ENCODE measurements at regions of chr6 and their contacts with region 1.

Region 1: GRCh38 chr6:25318589-25318988 is 39.4 kb downstream of the CARMIL1 start:
- DNase-seq: no peak
- ATAC-seq: no peak
- H3K4me3 ChIP-seq: no peak overlapping the region
- H3K27ac ChIP-seq: no peak overlapping the region
- H3K4me1 ChIP-seq: peaks cover 3% of the 10 kb centered on the region
- H3K27me3 ChIP-seq: no peaks in the 10 kb centered on the region
- CTCF ChIP-seq: no peak

Region 2: DNA sequence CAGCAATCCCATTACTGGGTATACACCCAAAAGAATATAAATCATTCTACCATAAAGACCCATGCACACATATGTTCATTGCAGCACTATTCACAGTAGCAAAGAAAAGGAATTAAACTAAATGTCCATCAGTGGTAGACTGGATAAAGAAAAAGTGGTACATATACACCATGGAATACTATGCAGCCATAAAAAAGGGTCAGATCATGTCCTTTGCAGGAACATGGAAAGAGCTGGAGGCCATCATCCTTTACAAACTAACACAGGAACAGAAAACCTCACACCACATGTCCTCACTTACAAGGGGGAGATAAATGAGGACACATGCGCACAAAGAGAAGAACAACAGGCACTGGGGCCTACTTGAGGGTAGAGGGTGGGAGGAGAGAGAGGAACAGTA is 1021.6 kb before region 1 on chr6:
- CTCF ChIA-PET with region 1: no interaction called
- POLR2A ChIA-PET with region 1: no interaction called
- intact Hi-C with region 1: no loop called
- DNase-seq: no peak
- ATAC-seq: no peak
- H3K4me3 ChIP-seq: no peak overlapping the region
- H3K27ac ChIP-seq: no peak overlapping the region
- H3K4me1 ChIP-seq: no peaks in the 10 kb centered on the region
- H3K27me3 ChIP-seq: no peaks in the 10 kb centered on the region
- CTCF ChIP-seq: no peak

Region 3: DNA sequence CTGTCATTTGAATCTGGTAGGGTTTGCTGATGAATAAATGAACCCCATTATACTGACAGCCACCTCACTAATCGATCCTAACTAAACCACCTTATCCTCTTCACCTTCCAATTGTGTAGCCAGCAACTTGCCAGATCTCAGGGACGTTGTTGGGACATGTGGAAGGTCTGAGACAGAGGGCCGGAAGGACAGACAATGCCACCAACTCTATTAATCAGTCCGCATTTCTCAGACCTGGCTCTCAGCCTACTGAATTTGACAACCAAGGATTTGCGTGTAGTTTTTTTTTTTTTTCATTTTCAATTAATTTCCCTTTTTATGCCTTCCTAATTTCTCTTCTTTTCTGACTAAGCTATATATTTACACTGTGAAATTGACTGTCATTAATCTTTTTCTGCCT is 83.1 kb after region 1 on chr6:
- CTCF ChIA-PET with region 1: no interaction called
- POLR2A ChIA-PET with region 1: interaction called, 14 read pairs
- intact Hi-C with region 1: no loop called
- DNase-seq: no peak
- ATAC-seq: no peak
- H3K4me3 ChIP-seq: no peak overlapping the region
- H3K27ac ChIP-seq: no peak overlapping the region
- H3K4me1 ChIP-seq: no peaks in the 10 kb centered on the region
- H3K27me3 ChIP-seq: no peaks in the 10 kb centered on the region
- CTCF ChIP-seq: no peak